ENCODE measurements at regions of chr17 and their contacts with region 1.

Region 1: DNA sequence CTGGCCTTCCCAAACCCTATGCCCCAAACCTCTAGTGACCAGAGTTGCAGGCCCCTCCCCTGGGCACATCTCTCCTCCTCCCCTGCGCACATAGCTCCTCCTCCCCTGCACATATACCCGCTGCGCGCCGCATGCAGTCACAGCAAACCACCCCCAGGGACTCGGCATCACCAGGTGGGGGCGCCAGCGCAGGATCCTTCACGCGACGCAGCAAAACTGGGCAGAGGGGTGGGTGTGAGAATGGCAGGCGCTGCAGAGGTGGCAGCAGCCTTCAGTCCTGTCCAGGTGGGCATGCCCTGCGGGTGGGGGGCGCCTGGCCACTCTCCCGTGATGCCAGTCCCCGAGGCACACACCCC is 5.6 kb downstream of the CORO6 start:
- DNase-seq: peak; percentile 89
- H3K4me3 Mint-ChIP-seq: peak overlapping the region; percentile 74
- H3K27ac Mint-ChIP-seq: peak overlapping the region; percentile 84
- H3K4me1 Mint-ChIP-seq: peaks cover 42% of the 10 kb centered on the region
- H3K27me3 Mint-ChIP-seq: no peaks in the 10 kb centered on the region

Region 2: DNA sequence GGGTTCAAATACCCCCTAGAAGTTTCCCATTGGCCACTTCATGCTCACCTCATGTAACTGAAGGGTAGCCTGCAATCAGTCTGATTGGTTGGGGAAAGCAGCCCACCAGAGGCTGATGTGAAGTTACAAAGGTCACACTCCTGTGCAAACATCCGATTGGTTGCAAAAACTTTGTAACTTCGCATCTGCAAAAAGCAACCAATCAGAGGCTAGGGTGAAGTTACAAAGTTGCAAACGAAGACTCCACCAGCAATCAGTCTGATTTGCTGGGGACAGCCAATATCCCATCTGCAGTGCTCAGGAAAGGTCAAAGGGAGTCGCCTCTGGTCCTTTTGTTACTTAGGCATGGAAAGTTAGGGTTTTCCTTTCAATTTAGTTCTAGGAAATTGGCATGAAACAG is 186.8 kb before region 1 on chr17:
- intact Hi-C with region 1: no loop called
- DNase-seq: no peak
- H3K4me3 Mint-ChIP-seq: no peak overlapping the region
- H3K27ac Mint-ChIP-seq: no peak overlapping the region
- H3K4me1 Mint-ChIP-seq: peaks cover 10% of the 10 kb centered on the region
- H3K27me3 Mint-ChIP-seq: no peaks in the 10 kb centered on the region

Region 3: GRCh38 chr17:29524460-29525091 is 92.5 kb before region 1 on chr17:
- intact Hi-C with region 1: no loop called
- DNase-seq: no peak
- H3K4me3 Mint-ChIP-seq: no peak overlapping the region
- H3K27ac Mint-ChIP-seq: peak overlapping the region; percentile 17
- H3K4me1 Mint-ChIP-seq: no peaks in the 10 kb centered on the region
- H3K27me3 Mint-ChIP-seq: no peaks in the 10 kb centered on the region

Region 4: DNA sequence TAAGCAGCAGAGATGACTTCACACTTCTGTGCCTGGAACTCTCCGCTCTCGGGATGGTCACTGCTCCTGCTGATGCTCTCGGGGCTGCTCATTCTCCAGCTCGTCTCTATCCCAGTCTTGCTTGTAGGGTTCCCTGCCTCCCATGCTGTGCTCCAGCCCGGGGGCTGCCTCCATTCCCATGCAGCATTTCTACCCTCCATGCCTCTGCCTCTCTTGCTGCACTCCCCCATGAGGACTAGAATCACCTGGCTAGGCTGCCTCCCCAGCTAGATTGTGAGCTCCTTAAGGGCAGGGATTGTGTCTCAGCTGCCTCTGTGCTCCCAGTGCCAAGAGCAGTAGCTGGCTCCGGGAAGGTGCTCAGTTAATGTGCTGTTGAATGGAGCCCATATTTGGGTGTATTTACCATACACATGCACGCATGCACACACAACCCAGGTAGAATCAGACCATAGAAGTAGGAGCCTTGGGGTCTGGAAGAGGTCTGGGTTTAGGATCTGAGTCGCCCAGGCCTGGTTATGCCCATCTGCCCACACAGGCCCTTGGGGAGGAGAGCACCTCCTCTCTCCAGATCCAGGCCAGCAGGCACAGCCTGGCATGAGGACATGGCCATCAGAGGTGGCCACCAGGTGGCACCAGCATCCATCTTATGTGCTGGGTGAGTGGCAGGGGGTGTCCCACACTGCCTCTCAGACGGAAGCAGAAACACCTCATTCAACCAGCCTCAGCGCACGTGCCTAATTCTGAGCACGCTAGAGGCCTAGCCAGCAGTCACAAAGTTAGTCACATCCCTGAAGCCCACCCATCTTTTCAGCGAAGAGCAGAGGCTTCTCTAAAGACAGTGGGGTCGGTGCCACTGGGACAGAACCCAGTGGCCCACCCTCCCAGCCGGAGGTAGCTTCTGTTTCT is 37.0 kb before region 1 on chr17:
- intact Hi-C with region 1: loop called (anchors 1 kb)
- DNase-seq: peak; percentile 82
- H3K4me3 Mint-ChIP-seq: no peak overlapping the region
- H3K27ac Mint-ChIP-seq: peak overlapping the region; percentile 84
- H3K4me1 Mint-ChIP-seq: peaks cover 14% of the 10 kb centered on the region
- H3K27me3 Mint-ChIP-seq: no peaks in the 10 kb centered on the region

Region 5: DNA sequence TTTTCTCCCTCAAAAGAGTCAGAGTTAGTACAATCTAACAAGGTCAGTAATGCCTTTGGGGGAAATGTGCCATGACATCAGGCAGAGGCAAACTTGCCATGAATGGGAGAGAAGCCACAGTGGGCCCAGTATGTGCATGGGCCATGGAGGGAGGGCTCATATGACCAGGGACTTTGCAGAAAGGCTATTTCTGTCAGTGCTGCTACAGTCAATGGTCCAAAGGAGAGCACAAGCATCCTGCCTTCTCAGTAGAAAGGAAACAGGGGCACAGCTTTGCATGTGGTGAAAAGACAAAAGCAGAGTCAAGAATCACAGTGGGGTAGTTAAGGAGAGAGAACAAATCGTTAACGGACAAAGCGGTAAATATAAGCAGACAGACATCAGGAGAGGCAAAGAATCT is 16.8 kb after region 1 on chr17:
- intact Hi-C with region 1: no loop called
- DNase-seq: no peak
- H3K4me3 Mint-ChIP-seq: no peak overlapping the region
- H3K27ac Mint-ChIP-seq: no peak overlapping the region
- H3K4me1 Mint-ChIP-seq: peaks cover 15% of the 10 kb centered on the region
- H3K27me3 Mint-ChIP-seq: no peaks in the 10 kb centered on the region

Region 6: GRCh38 chr17:29709861-29710519 is 92.9 kb after region 1 on chr17:
- intact Hi-C with region 1: loop called (anchors 5 kb)
- DNase-seq: no peak
- H3K4me3 Mint-ChIP-seq: no peak overlapping the region
- H3K27ac Mint-ChIP-seq: no peak overlapping the region
- H3K4me1 Mint-ChIP-seq: peaks cover 44% of the 10 kb centered on the region
- H3K27me3 Mint-ChIP-seq: no peaks in the 10 kb centered on the region

Region 7: GRCh38 chr17:29777663-29778062 is 160.6 kb after region 1 on chr17:
- intact Hi-C with region 1: loop called (anchors 1 kb)
- DNase-seq: no peak
- H3K4me3 Mint-ChIP-seq: no peak overlapping the region
- H3K27ac Mint-ChIP-seq: no peak overlapping the region
- H3K4me1 Mint-ChIP-seq: peaks cover 3% of the 10 kb centered on the region
- H3K27me3 Mint-ChIP-seq: no peaks in the 10 kb centered on the region

Measured in activated T-helper 2 cell treated with anti-CD3 and anti-CD28 coated beads, Interferon-gamma antibody, Interleukin-2, Interleukin-4, amounts not matched to agents 10 μg/mL and 5 μg/mL and 100 μg/mL, durations not matched to agents 14 hours and 24 hours and 36 hours (primary cell).